Mammary epithelial cell (primary cell): ENCODE measurements at regions of chr20 and their contacts with region 1.

Region 1: GRCh38 chr20:31723319-31724078 is 831 bp upstream of the BCL2L1 start:
- DNase-seq: peak; percentile 96
- H3K4me3 ChIP-seq: peak overlapping the region; percentile 78 to 89 (median 86)
- H3K27ac ChIP-seq: peak overlapping the region; percentile 89
- H3K4me1 ChIP-seq: peaks cover 26% of the 10 kb centered on the region
- H3K27me3 ChIP-seq: no peaks in the 10 kb centered on the region
- CTCF ChIP-seq: peak; percentile 89 to 93

Region 2: DNA sequence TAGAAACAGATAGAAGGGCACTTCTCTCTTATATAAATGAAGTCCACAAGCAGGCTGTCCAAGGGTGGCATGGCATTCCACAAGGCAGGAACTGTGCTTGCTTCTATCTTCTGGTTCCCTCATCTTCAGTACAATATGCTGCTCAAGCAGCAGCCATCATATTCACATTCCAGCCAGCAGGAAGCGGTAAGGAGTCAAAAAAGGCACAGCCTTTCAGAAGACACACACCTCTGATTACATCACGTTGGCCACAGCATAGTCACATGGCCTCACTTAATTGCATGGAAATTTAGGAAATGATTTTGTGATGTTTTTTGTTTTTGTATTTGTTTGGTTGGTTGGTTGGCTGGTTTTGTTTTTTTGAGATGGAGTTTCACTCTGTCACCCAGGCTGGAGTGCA is 229.4 kb before region 1 on chr20:
- CTCF ChIA-PET with region 1: no interaction called
- dilution Hi-C with region 1: no loop called
- in situ Hi-C with region 1: no loop called
- intact Hi-C with region 1: no loop called
- DNase-seq: peak; percentile 49
- H3K4me3 ChIP-seq: no peak overlapping the region
- H3K27ac ChIP-seq: no peak overlapping the region
- H3K4me1 ChIP-seq: peaks cover 4% of the 10 kb centered on the region
- H3K27me3 ChIP-seq: no peaks in the 10 kb centered on the region
- CTCF ChIP-seq: peak; percentile 47 to 56

Region 3: GRCh38 chr20:31560094-31560899 is 163.2 kb before region 1 on chr20:
- CTCF ChIA-PET with region 1: interaction called, 5 read pairs
- dilution Hi-C with region 1: loop called (anchors 25 kb)
- in situ Hi-C with region 1: loop called in 1 of 2 experiments (anchors 25 kb)
- intact Hi-C with region 1: loop called (anchors 1 kb)
- DNase-seq: peak; percentile 76
- H3K4me3 ChIP-seq: no peak overlapping the region
- H3K27ac ChIP-seq: peak overlapping the region; percentile 93
- H3K4me1 ChIP-seq: peaks cover 51% of the 10 kb centered on the region
- H3K27me3 ChIP-seq: no peaks in the 10 kb centered on the region
- CTCF ChIP-seq: peak; percentile 92 to 99

Region 4: DNA sequence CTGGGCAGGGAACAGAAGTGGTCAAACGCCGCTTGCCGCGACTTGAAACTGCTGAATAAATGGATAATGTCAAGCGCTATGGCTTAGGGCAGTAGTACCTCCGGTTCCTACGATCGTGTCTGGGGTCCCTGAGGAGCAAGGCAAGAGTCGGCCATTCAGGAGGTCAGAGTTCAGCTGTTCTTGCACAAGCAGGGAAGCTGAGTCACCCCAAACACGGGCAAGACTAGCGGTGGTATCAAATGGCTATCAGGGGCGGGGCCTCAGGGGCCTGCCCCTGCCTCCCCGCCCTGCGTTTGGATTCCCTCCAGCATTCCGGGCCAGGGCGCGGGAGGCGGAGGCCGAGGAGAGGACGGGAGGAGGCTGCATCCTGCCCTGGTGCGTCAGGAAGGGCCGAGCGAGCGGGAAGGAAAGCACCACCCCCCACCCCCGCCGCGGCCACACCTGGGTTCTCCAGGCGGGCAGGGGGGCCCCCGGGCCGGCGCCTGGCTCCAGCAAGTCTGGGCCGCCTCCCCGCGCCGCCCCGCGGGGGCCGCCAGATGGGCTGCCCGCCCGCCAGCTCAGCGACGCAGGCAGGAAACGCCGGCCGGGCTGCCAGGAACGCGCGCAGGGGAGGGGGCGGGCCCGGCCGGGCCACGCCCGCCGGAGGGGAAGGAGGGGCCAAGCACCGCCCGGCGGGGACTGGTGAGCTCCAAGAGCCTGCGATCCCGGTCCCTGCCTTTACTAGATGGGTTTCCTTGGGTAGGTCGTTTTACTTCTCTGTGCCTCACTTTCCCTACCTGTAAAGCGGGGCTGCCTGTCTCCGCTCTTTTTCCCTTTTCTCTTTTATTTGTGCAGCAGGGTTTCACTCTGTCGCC is 150.6 kb before region 1 on chr20:
- CTCF ChIA-PET with region 1: no interaction called
- dilution Hi-C with region 1: loop called (anchors 25 kb)
- in situ Hi-C with region 1: loop called in 1 of 2 experiments (anchors 25 kb)
- intact Hi-C with region 1: no loop called
- DNase-seq: peak; percentile 99
- H3K4me3 ChIP-seq: peak overlapping the region; percentile 43 to 51 (median 45)
- H3K27ac ChIP-seq: peak overlapping the region; percentile 84
- H3K4me1 ChIP-seq: peaks cover 45% of the 10 kb centered on the region
- H3K27me3 ChIP-seq: no peaks in the 10 kb centered on the region
- CTCF ChIP-seq: no peak

Region 5: DNA sequence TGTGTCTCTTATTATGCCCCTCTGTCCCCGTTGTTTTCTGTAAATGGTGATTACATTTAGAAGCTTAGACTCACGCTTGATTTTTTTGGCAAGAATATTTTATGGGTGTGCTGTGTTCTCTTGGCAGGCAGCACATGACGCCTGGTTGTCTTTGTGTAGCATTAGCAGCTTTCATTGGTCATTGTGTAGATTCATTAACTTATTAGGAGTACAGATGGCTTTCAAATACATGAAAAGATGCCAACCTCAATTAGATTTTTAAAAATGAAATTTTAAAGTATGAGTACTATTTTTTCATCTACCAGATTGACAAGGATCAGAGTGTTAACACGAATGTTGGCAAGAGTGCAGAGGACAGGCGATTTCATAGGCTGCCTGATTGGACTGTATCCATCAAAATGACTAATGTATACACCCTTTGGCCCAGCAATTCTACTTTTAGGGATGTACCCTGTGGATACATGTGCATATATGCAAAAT is 70.5 kb before region 1 on chr20:
- CTCF ChIA-PET with region 1: no interaction called
- dilution Hi-C with region 1: loop called (anchors 10 kb)
- in situ Hi-C with region 1: no loop called
- intact Hi-C with region 1: no loop called
- DNase-seq: no peak
- H3K4me3 ChIP-seq: no peak overlapping the region
- H3K27ac ChIP-seq: no peak overlapping the region
- H3K4me1 ChIP-seq: no peaks in the 10 kb centered on the region
- H3K27me3 ChIP-seq: no peaks in the 10 kb centered on the region
- CTCF ChIP-seq: no peak

Region 6: GRCh38 chr20:31674895-31675827 is 48.3 kb before region 1 on chr20:
- CTCF ChIA-PET with region 1: interaction called, 4 read pairs
- dilution Hi-C with region 1: loop called (anchors 5 kb)
- in situ Hi-C with region 1: loop called in 1 of 2 experiments (anchors 5 kb)
- intact Hi-C with region 1: loop called (anchors 1 kb)
- DNase-seq: peak; percentile 78
- H3K4me3 ChIP-seq: no peak overlapping the region
- H3K27ac ChIP-seq: peak overlapping the region; percentile 9
- H3K4me1 ChIP-seq: peaks cover 44% of the 10 kb centered on the region
- H3K27me3 ChIP-seq: no peaks in the 10 kb centered on the region
- CTCF ChIP-seq: no peak

Region 7: DNA sequence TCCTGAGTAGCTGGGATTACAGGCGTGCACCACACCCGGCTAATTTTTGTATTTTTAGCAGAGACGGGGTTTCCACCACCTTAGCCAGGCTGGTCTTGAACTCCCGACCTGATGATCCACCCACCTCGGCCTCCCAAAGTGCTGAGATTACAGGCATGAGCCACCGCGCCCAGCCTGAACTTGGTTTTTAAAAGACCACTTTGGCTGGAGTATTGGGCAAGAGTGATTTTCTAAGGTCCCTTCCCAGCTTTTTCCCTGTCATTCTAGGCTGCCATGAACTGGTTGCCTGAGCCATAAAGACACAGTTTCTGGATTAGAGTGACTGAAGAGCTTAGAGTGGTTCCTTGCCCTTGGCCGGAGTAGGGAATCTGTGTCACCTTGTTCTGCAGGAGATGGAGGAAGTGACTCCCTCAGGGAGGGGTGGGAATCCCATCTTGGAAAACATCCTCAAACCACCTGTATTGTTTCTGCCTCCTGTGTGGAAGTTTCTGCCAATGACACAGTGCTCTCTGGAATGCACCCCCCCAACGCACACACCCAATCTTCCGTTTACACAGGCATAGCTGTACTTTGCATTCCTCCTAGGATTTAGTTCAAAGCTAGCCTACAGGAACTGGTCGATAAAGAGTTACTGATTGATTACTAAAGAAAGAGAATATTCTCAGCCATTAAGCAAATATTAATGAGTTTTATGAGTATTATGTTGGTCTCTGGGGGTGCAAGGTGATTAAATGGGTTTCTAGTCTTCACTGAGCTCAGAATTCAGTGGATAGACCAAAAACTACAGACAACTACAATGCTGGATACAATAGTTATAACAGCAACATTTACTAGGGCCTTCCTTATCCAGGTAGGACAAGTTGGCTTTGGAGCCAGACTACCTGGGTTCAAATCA is 19.0 kb before region 1 on chr20:
- CTCF ChIA-PET with region 1: interaction called, 6 read pairs
- dilution Hi-C with region 1: no loop called
- in situ Hi-C with region 1: no loop called
- intact Hi-C with region 1: loop called (anchors 1 kb)
- DNase-seq: peak; percentile 97
- H3K4me3 ChIP-seq: peak overlapping the region in 1 of 3 experiments; percentile 4
- H3K27ac ChIP-seq: peak overlapping the region; percentile 99
- H3K4me1 ChIP-seq: peaks cover 55% of the 10 kb centered on the region
- H3K27me3 ChIP-seq: no peaks in the 10 kb centered on the region
- CTCF ChIP-seq: no peak

Region 8: GRCh38 chr20:31760519-31761240 is 37.2 kb after region 1 on chr20:
- CTCF ChIA-PET with region 1: no interaction called
- dilution Hi-C with region 1: no loop called
- in situ Hi-C with region 1: no loop called
- intact Hi-C with region 1: no loop called
- DNase-seq: no peak
- H3K4me3 ChIP-seq: no peak overlapping the region
- H3K27ac ChIP-seq: no peak overlapping the region
- H3K4me1 ChIP-seq: no peaks in the 10 kb centered on the region
- H3K27me3 ChIP-seq: no peaks in the 10 kb centered on the region
- CTCF ChIP-seq: no peak

Region 9: GRCh38 chr20:32652739-32653526 is 929.4 kb after region 1 on chr20:
- CTCF ChIA-PET with region 1: no interaction called
- dilution Hi-C with region 1: no loop called
- in situ Hi-C with region 1: no loop called
- intact Hi-C with region 1: loop called (anchors 5 kb)
- DNase-seq: peak; percentile 67
- H3K4me3 ChIP-seq: no peak overlapping the region
- H3K27ac ChIP-seq: no peak overlapping the region
- H3K4me1 ChIP-seq: peaks cover 11% of the 10 kb centered on the region
- H3K27me3 ChIP-seq: no peaks in the 10 kb centered on the region
- CTCF ChIP-seq: peak; percentile 89 to 92